Heart left ventricle (tissue), 16 donors: ENCODE measurements at regions of chr12 and their contacts with region 1.

Region 1: DNA sequence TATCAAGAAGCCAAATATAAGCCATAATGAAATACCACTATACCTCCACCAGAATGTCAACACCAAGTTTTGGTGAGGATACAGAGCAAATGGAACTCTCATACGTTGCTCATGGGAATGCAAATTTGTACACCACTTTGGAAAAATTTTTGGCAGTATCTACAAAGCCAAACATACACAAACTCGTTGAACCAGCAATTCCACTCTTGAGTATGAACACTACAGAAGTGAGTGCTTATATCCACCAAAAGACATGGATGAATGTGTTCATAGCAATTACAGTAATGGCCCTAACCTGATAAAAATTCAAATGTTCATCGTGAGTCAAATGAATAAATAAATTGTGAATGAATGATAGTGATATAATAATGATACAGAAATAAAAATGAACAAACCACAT is 24.8 kb downstream of the C12orf71 start:
- DNase-seq: no peak
- ATAC-seq: no peak
- H3K4me3 ChIP-seq: no peak overlapping the region
- H3K27ac ChIP-seq: no peak overlapping the region
- H3K4me1 ChIP-seq: no peaks in the 10 kb centered on the region
- H3K27me3 ChIP-seq: no peaks in the 10 kb centered on the region
- CTCF ChIP-seq: no peak
- POLR2A ChIP-seq: no peak

Region 2: DNA sequence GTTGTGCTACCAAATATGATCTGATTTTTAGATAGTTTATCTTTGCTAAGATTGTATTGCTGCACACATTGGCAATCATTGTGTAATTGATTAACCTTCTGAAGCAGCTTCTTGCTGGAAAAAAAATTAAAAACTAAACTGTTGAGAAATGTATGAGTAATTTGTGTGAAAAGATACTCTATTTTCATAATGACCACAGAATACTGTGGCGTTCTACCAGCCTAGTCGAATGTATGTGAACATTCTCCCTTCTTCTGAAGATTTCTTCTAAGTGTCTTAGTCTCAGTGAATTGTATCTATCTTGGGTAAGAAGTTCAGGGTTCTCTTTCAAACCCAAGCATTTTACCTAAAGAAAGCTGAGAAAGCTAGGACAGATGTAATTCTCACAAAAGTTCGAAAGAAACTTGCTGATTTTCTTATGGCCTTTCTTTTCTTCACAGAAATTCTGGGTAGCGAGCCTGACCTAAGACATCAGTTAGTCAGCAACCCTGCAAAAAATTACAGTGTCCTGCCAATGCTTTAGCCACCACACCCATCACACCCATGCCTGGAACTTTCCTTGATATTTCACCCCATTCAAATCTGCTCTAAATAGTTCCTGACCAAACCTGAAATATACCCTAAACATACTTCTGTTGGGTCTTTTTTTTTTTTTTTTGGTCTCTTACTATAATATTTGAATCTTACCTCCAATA is 51.9 kb after region 1 on chr12:
- intact Hi-C with region 1: loop called in 1 of 10 experiments (anchors 10 kb)
- DNase-seq: no peak
- ATAC-seq: no peak
- H3K4me3 ChIP-seq: no peak overlapping the region
- H3K27ac ChIP-seq: no peak overlapping the region
- H3K4me1 ChIP-seq: peaks cover 0 to 6% (median 0%) of the 10 kb centered on the region in 12 donors
- H3K27me3 ChIP-seq: no peaks in the 10 kb centered on the region
- CTCF ChIP-seq: no peak
- POLR2A ChIP-seq: no peak

Region 3: DNA sequence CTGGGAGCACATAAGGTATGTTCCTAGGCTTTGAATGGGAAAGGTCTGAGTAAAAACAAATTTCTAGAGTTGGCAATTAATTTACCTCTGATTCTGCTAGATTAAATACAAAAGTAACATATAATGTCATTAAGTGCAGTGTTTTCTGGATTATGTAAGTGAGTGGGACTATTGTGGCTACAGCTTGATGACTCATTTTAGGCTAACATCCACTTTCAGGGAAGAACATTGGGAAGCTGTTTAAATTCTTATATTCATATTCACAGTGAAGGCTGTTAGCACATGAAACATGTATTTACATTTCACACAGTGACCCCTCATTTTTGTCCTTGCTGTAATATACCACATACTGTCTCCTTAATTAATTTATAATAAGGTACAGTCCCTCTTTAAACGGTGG is 261.9 kb after region 1 on chr12:
- intact Hi-C with region 1: loop called in 1 of 10 experiments (anchors 10 kb)
- DNase-seq: no peak
- ATAC-seq: no peak
- H3K4me3 ChIP-seq: no peak overlapping the region
- H3K27ac ChIP-seq: no peak overlapping the region
- H3K4me1 ChIP-seq: no peaks in the 10 kb centered on the region
- H3K27me3 ChIP-seq: no peaks in the 10 kb centered on the region
- CTCF ChIP-seq: no peak
- POLR2A ChIP-seq: no peak